Naive thymus-derived CD4-positive, alpha-beta T cell (primary cell): ENCODE measurements at regions of chr2 and their contacts with region 1.

Region 1: GRCh38 chr2:86105252-86105968 is at the start of gene POLR1A:
- DNase-seq: peak; percentile 61 to 91 (median 89)
- ATAC-seq: peak; percentile 86
- H3K4me3 ChIP-seq: peak within 1 kb of the TSS; percentile 95
- H3K4me3 Mint-ChIP-seq: peak within 1 kb of the TSS; percentile 90 to 97 (median 92)
- H3K27ac ChIP-seq: peak within 1 kb of the TSS; percentile 86
- H3K27ac Mint-ChIP-seq: peak within 1 kb of the TSS; percentile 95 to 100 (median 99)
- H3K4me1 ChIP-seq: peaks cover 20 to 28% of the 10 kb centered on the region in 2 donors
- H3K4me1 Mint-ChIP-seq: peaks cover 37 to 86% (median 76%) of the 10 kb centered on the region in 7 donors
- H3K27me3 ChIP-seq: no peaks in the 10 kb centered on the region
- H3K27me3 Mint-ChIP-seq: no peaks in the 10 kb centered on the region
- total RNA-seq, gene POLR1A: 18.8 to 44.4 (median 21.7) TPM

Region 2: GRCh38 chr2:85354286-85355072 is 750.9 kb before region 1 on chr2 and contains the starts of genes ELMOD3 and RETSAT:
- CTCF ChIA-PET with region 1: no interaction called
- POLR2A ChIA-PET with region 1: no interaction called
- intact Hi-C with region 1: loop called (anchors 1 kb)
- DNase-seq: peak; percentile 79 to 99 (median 98)
- ATAC-seq: peak; percentile 99
- H3K4me3 ChIP-seq: peak within 1 kb of the TSS; percentile 86
- H3K4me3 Mint-ChIP-seq: peak within 1 kb of the TSS; percentile 91 to 100 (median 100)
- H3K27ac ChIP-seq: peak within 1 kb of the TSS; percentile 89
- H3K27ac Mint-ChIP-seq: peak within 1 kb of the TSS; percentile 93 to 100 (median 99)
- H3K4me1 ChIP-seq: peaks cover 19 to 28% of the 10 kb centered on the region in 2 donors
- H3K4me1 Mint-ChIP-seq: peaks cover 36 to 61% (median 53%) of the 10 kb centered on the region in 7 donors
- H3K27me3 ChIP-seq: no peaks in the 10 kb centered on the region
- H3K27me3 Mint-ChIP-seq: no peaks in the 10 kb centered on the region
- total RNA-seq, gene ELMOD3: 20.2 to 33.3 (median 21.7) TPM
- total RNA-seq, gene RETSAT: 18.5 to 30.5 (median 20.2) TPM

Region 3: GRCh38 chr2:85619617-85620016 is 485.8 kb before region 1 on chr2:
- CTCF ChIA-PET with region 1: no interaction called
- POLR2A ChIA-PET with region 1: interaction called, 3 read pairs
- intact Hi-C with region 1: loop called (anchors 5 to 10 kb)
- DNase-seq: no peak
- ATAC-seq: no peak
- H3K4me3 ChIP-seq: no peak overlapping the region
- H3K4me3 Mint-ChIP-seq: no peak overlapping the region
- H3K27ac ChIP-seq: no peak overlapping the region
- H3K27ac Mint-ChIP-seq: no peak overlapping the region
- H3K4me1 ChIP-seq: peaks cover 12 to 15% of the 10 kb centered on the region in 2 donors
- H3K4me1 Mint-ChIP-seq: peaks cover 11 to 38% (median 32%) of the 10 kb centered on the region in 7 donors
- H3K27me3 ChIP-seq: no peaks in the 10 kb centered on the region
- H3K27me3 Mint-ChIP-seq: no peaks in the 10 kb centered on the region

Region 4: GRCh38 chr2:85852937-85853498 is 252.4 kb before region 1 on chr2:
- CTCF ChIA-PET with region 1: no interaction called
- POLR2A ChIA-PET with region 1: interaction called, 9 read pairs
- intact Hi-C with region 1: loop called (anchors 1 kb)
- DNase-seq: peak; percentile 35 to 77 (median 63)
- ATAC-seq: peak; percentile 92
- H3K4me3 ChIP-seq: peak overlapping the region; percentile 36
- H3K4me3 Mint-ChIP-seq: peak overlapping the region; percentile 80 to 94 (median 86)
- H3K27ac ChIP-seq: peak overlapping the region; percentile 91
- H3K27ac Mint-ChIP-seq: peak overlapping the region; percentile 98 to 100 (median 100)
- H3K4me1 ChIP-seq: peaks cover 54% of the 10 kb centered on the region in 2 donors
- H3K4me1 Mint-ChIP-seq: peaks cover 48 to 84% (median 68%) of the 10 kb centered on the region in 7 donors
- H3K27me3 ChIP-seq: no peaks in the 10 kb centered on the region
- H3K27me3 Mint-ChIP-seq: no peaks in the 10 kb centered on the region

Region 5: GRCh38 chr2:86087936-86088850 is 17.2 kb before region 1 on chr2:
- CTCF ChIA-PET with region 1: no interaction called
- POLR2A ChIA-PET with region 1: no interaction called
- intact Hi-C with region 1: no loop called
- DNase-seq: no peak
- ATAC-seq: no peak
- H3K4me3 ChIP-seq: no peak overlapping the region
- H3K4me3 Mint-ChIP-seq: peak overlapping the region in 1 of 10 donors; percentile 20
- H3K27ac ChIP-seq: no peak overlapping the region
- H3K27ac Mint-ChIP-seq: no peak overlapping the region
- H3K4me1 ChIP-seq: no peaks in the 10 kb centered on the region
- H3K4me1 Mint-ChIP-seq: no peaks in the 10 kb centered on the region
- H3K27me3 ChIP-seq: no peaks in the 10 kb centered on the region
- H3K27me3 Mint-ChIP-seq: no peaks in the 10 kb centered on the region

Region 6: DNA sequence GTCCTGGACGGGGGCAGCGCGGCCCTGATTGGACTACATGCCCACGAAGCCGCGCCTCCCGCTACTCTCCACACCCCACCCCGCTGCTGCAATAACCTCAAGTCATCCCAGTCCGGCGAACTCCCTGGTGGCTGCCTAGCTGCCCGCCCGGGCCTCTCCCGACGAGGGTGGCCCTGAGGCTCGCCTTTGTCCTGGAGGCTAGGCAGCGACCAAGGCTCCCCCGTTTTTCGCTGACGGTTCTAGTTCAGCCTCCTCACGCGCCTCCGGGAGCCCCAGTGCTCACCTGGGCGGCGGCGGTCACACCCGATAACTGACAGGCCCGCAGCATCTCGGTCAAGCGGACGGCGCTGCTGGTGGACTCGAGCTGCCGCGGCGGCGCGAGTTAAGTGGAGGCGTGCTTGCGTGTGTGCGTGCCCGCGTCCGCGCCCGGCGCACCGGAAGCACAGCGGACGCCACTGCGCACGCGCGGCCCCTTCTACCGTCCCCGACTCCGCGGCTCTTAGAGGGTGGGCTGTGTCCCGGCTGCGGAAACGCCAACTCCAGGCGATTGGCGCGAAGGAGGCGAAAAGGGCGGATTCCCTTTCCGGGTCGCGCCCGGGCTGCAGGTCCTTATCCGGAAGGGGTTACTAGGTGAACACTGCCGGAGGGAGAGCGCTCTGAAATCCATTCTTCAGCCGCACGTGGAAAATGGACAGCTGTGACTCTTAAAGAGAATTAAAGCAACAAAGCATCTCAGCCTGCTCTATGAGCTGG is 89.8 kb after region 1 on chr2 and contains the start of gene IMMT:
- CTCF ChIA-PET with region 1: interaction called, 8 read pairs
- POLR2A ChIA-PET with region 1: interaction called, 5 read pairs
- intact Hi-C with region 1: loop called (anchors 1 kb)
- DNase-seq: peak; percentile 86 to 96 (median 94)
- ATAC-seq: peak; percentile 94
- H3K4me3 ChIP-seq: peak within 1 kb of the TSS; percentile 74
- H3K4me3 Mint-ChIP-seq: peak within 1 kb of the TSS; percentile 86 to 99 (median 95)
- H3K27ac ChIP-seq: peak within 1 kb of the TSS; percentile 97
- H3K27ac Mint-ChIP-seq: peak within 1 kb of the TSS; percentile 82 to 97 (median 90)
- H3K4me1 ChIP-seq: peaks cover 15 to 23% of the 10 kb centered on the region in 2 donors
- H3K4me1 Mint-ChIP-seq: peaks cover 35 to 74% (median 60%) of the 10 kb centered on the region in 7 donors
- H3K27me3 ChIP-seq: no peaks in the 10 kb centered on the region
- H3K27me3 Mint-ChIP-seq: no peaks in the 10 kb centered on the region
- total RNA-seq, gene IMMT: 59.2 to 164 (median 77.0) TPM

Region 7: DNA sequence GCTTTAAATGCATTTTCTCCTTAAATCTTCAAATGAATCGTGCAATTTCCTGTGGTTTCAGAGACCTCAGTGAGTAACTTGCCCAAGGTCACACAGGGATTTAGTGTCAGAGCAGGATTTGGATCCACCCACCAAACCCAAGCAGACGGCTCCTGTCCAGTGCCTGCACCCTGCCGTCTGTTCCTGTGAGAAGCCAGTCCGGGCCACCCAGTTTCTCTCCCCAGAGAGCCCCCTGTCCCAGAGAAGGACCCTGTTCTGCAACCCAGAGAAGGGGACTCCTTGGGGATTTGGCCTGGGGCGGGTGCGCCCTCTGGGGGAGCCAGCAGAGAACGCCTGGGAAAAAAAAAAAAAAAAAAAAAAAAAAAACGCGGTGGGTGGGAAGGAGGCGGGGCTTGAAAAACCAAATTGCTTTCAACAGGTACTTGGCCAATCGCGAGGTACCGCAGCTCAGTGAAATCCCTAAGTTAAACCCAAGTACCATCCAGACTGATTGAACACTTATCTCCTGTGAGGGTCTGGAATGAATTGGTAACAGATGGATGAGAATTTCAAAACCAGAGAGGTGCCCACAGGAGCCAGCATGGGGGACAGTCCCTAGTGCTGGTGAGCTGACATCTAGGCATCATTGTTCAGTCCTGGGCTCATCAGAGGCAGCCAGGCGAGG is 262.9 kb after region 1 on chr2:
- CTCF ChIA-PET with region 1: no interaction called
- POLR2A ChIA-PET with region 1: interaction called, 5 read pairs
- intact Hi-C with region 1: loop called in 1 of 2 experiments (anchors 5 kb)
- DNase-seq: peak; percentile 12 to 51 (median 43)
- ATAC-seq: peak; percentile 75
- H3K4me3 ChIP-seq: peak overlapping the region; percentile 50
- H3K4me3 Mint-ChIP-seq: peak overlapping the region; percentile 43 to 84 (median 70)
- H3K27ac ChIP-seq: no peak overlapping the region
- H3K27ac Mint-ChIP-seq: peak overlapping the region in 8 of 9 donors; percentile 60 to 94 (median 82)
- H3K4me1 ChIP-seq: peaks cover 6 to 51% of the 10 kb centered on the region in 2 donors
- H3K4me1 Mint-ChIP-seq: peaks cover 24 to 77% (median 63%) of the 10 kb centered on the region in 7 donors
- H3K27me3 ChIP-seq: no peaks in the 10 kb centered on the region
- H3K27me3 Mint-ChIP-seq: no peaks in the 10 kb centered on the region

Region 8: GRCh38 chr2:86396291-86396785 is 290.9 kb after region 1 on chr2:
- CTCF ChIA-PET with region 1: no interaction called
- POLR2A ChIA-PET with region 1: no interaction called
- intact Hi-C with region 1: no loop called
- DNase-seq: no peak
- ATAC-seq: no peak
- H3K4me3 ChIP-seq: no peak overlapping the region
- H3K4me3 Mint-ChIP-seq: no peak overlapping the region
- H3K27ac ChIP-seq: no peak overlapping the region
- H3K27ac Mint-ChIP-seq: peak overlapping the region in 1 of 9 donors; percentile 38
- H3K4me1 ChIP-seq: peaks cover 0 to 17% of the 10 kb centered on the region in 2 donors
- H3K4me1 Mint-ChIP-seq: peaks cover 7 to 21% (median 15%) of the 10 kb centered on the region in 7 donors
- H3K27me3 ChIP-seq: peaks cover 0 to 6% of the 10 kb centered on the region in 2 donors
- H3K27me3 Mint-ChIP-seq: peaks cover 0 to 14% (median 3%) of the 10 kb centered on the region in 5 donors

Region 9: GRCh38 chr2:86522711-86523110 is 417.3 kb after region 1 on chr2:
- CTCF ChIA-PET with region 1: no interaction called
- POLR2A ChIA-PET with region 1: no interaction called
- intact Hi-C with region 1: no loop called
- DNase-seq: no peak
- ATAC-seq: no peak
- H3K4me3 ChIP-seq: no peak overlapping the region
- H3K4me3 Mint-ChIP-seq: no peak overlapping the region
- H3K27ac ChIP-seq: no peak overlapping the region
- H3K27ac Mint-ChIP-seq: no peak overlapping the region
- H3K4me1 ChIP-seq: no peaks in the 10 kb centered on the region
- H3K4me1 Mint-ChIP-seq: peaks cover 0 to 5% (median 0%) of the 10 kb centered on the region in 7 donors
- H3K27me3 ChIP-seq: no peaks in the 10 kb centered on the region
- H3K27me3 Mint-ChIP-seq: no peaks in the 10 kb centered on the region

Region 10: DNA sequence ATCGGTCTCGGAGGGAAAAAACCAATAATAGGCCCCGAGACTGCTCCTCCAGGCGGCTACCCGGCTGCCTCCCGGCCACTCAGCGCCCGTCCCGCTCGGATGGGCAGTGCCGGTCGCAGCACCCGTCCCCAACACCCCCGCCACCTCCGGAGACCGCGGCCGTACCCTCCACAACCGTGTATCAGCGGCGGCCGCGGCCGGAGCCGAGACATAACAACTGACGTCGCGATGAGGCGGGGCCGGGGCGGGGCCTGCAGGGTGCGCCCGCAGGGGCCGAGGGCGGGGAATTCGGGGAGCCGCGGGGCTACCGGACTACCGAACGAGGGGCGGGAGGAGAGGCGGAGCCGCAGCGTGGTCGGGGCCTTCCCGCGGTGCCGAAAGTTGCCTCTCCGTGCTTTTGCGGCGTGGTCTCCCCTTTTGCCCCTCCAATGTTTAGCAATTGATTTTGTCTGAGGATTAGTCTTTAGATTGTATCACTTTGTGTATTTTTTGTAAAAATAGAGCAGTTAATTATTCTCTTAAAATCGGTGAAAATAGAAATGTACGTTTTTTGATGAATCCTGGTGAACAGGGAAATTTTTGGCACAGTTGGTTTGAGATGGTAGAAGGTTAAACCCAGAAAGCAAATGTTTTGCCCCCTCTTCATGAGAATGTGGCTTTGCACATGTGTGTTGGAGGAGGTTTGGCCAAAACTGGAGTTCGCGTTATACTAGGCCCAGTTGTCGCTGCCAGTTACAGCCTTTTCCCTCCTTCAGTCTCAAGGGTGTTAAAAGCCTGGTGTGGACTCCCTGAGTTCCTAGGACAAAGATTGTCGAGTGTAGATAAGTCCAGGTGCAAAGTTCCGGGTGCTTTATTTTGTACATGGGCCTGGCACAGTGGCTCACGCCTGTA is 518.5 kb after region 1 on chr2 and contains the start of gene RNF103:
- CTCF ChIA-PET with region 1: no interaction called
- POLR2A ChIA-PET with region 1: no interaction called
- intact Hi-C with region 1: loop called in 1 of 2 experiments (anchors 5 kb)
- DNase-seq: peak; percentile 83 to 97 (median 88)
- ATAC-seq: peak; percentile 93
- H3K4me3 ChIP-seq: peak within 1 kb of the TSS; percentile 85
- H3K4me3 Mint-ChIP-seq: peak within 1 kb of the TSS; percentile 86 to 99 (median 93)
- H3K27ac ChIP-seq: peak within 1 kb of the TSS; percentile 97
- H3K27ac Mint-ChIP-seq: peak within 1 kb of the TSS; percentile 90 to 99 (median 94)
- H3K4me1 ChIP-seq: peaks cover 11 to 17% of the 10 kb centered on the region in 2 donors
- H3K4me1 Mint-ChIP-seq: peaks cover 21 to 42% (median 34%) of the 10 kb centered on the region in 7 donors
- H3K27me3 ChIP-seq: no peaks in the 10 kb centered on the region
- H3K27me3 Mint-ChIP-seq: peaks cover 0 to 30% (median 0%) of the 10 kb centered on the region in 5 donors
- total RNA-seq, gene RNF103: 15.6 to 71.2 (median 37.8) TPM